ENCODE measurements at regions of chr19 and their contacts with region 1.

Region 1: GRCh38 chr19:46990991-46991676 is 28.5 kb upstream of the NPAS1 start:
- DNase-seq: peak; percentile 77 to 85
- ATAC-seq: peak; percentile 70 to 87
- H3K4me3 ChIP-seq: no peak overlapping the region
- H3K27ac ChIP-seq: peak overlapping the region; percentile 31 to 65; a peak in 3 of 6 replicates
- H3K4me1 ChIP-seq: peaks cover 9% of the 10 kb centered on the region; the same call in 2 of the 3 replicates
- CTCF ChIP-seq: peak; percentile 97
- EP300 ChIP-seq: no peak
- POLR2A ChIP-seq: no peak
- RAD21 ChIP-seq: peak; percentile 99

Region 2: GRCh38 chr19:46766569-46767317 is 224.4 kb before region 1 on chr19:
- CTCF ChIA-PET with region 1: interaction called, 11 read pairs
- POLR2A ChIA-PET with region 1: no interaction called
- DNase-seq: peak in 1 of 2 experiments; percentile 75
- ATAC-seq: peak; percentile 79 to 84
- H3K4me3 ChIP-seq: no peak overlapping the region
- H3K27ac ChIP-seq: no peak overlapping the region
- H3K4me1 ChIP-seq: peaks cover 21% of the 10 kb centered on the region; the same call in 2 of the 3 replicates
- CTCF ChIP-seq: peak; percentile 87
- EP300 ChIP-seq: no peak
- POLR2A ChIP-seq: no peak
- RAD21 ChIP-seq: peak; percentile 38 to 59; a peak in 4 of 5 replicates

Region 3: DNA sequence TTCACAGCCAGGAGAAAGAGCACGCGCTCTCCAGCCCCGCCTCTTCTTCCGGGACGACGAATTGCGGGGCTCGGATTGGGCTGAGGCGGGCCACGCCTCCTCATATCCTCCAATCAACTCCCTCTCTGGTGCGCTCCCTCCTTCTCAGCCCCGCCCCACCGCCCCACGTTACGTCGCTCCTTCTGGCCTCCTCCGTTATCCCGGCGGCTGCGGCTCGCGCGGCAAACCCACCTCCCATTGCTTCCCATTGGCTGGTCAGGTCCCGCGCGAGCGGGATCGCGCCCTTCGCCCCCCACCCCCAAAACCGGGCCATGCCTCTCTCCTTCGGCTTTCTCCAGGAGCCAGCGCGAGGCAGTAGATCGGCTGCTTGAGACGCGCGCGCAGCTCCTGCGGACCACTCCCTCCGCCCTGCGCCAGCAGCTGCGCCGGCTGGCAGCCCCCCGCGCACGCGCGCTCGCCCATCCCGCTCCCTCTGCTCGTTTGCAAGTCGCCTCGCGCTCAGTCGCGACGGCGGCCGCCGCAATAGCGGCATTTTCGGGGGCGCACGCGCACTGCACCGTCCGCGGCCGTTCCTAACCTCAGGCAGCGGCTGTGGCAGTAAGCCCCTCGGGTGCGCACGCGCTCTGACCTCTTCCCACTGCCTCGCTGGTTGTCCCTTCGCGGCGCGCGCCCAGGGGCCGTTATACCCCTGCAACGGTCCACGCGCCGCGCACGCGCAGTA is 130.8 kb before region 1 on chr19:
- CTCF ChIA-PET with region 1: interaction called, 339 read pairs
- POLR2A ChIA-PET with region 1: interaction called, 3 read pairs
- DNase-seq: peak; percentile 98 to 100
- ATAC-seq: peak; percentile 75 to 86
- H3K4me3 ChIP-seq: peak overlapping the region; percentile 94
- H3K27ac ChIP-seq: peak overlapping the region; percentile 99
- H3K4me1 ChIP-seq: peaks cover 55% of the 10 kb centered on the region
- CTCF ChIP-seq: no peak
- EP300 ChIP-seq: peak in 1 of 2 experiments; percentile 13; a peak in 1 of 5 replicates
- POLR2A ChIP-seq: peak; percentile 91; the same call in 1 of the 2 replicates
- RAD21 ChIP-seq: peak in 1 of 2 experiments; percentile 23; a peak in 1 of 5 replicates

Region 4: GRCh38 chr19:46890423-46891170 is 100.5 kb before region 1 on chr19:
- CTCF ChIA-PET with region 1: interaction called, 28 read pairs
- POLR2A ChIA-PET with region 1: no interaction called
- DNase-seq: peak; percentile 64 to 87
- ATAC-seq: peak; percentile 91 to 96
- H3K4me3 ChIP-seq: 0 out of 3 replicates have a peak overlapping the region, but pooled peaks have one; percentile 7
- H3K27ac ChIP-seq: peak overlapping the region; percentile 69 to 83
- H3K4me1 ChIP-seq: peaks cover 69% of the 10 kb centered on the region
- CTCF ChIP-seq: no peak
- EP300 ChIP-seq: no peak
- POLR2A ChIP-seq: no peak
- RAD21 ChIP-seq: peak; percentile 36 to 41; a peak in 3 of 5 replicates

Region 5: DNA sequence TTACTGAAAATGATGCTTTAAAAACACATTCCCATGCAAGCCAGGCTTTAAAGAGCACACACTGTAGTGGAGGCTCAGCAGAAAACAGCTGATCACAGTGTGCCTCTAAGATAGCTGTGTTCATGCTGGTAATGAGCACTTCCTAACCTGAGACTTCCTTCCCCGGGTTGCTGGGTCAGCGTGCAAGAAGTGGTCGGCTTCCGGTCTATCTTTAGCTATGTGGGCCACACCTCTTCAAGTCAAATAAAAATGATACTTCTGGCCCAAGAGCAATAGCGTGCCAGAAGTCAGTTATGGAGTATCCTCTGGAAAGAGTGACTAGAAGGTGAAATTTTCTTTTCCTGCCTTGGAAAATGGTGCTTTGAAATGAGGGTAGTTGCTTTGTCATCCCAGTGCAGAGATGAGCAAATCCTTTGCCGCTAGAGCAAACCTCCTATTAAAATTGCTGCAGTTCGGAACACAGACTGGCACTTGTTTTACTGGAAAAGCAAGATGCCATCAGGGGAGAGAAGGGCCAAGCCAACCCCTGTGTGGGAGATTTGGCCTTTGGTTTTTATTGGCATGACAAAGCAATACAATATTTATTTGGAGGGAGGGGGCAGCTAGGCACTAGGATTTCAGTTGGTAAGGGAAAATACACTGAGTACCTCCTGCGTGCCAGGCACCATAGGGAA is 66.1 kb before region 1 on chr19:
- CTCF ChIA-PET with region 1: interaction called, 83 read pairs
- POLR2A ChIA-PET with region 1: no interaction called
- DNase-seq: peak; percentile 40 to 70
- ATAC-seq: peak; percentile 72 to 78
- H3K4me3 ChIP-seq: peak overlapping the region; percentile 1; the same call in 1 of the 3 replicates
- H3K27ac ChIP-seq: peak overlapping the region; percentile 66 to 81
- H3K4me1 ChIP-seq: peaks cover 64% of the 10 kb centered on the region
- CTCF ChIP-seq: no peak
- EP300 ChIP-seq: no peak
- POLR2A ChIP-seq: no peak
- RAD21 ChIP-seq: no peak; a peak in 1 of 5 replicates

Region 6: GRCh38 chr19:46975925-46976782 is 15.0 kb before region 1 on chr19:
- CTCF ChIA-PET with region 1: interaction called, 156 read pairs
- POLR2A ChIA-PET with region 1: no interaction called
- DNase-seq: peak in 1 of 2 experiments; percentile 58
- ATAC-seq: peak; percentile 38 to 75
- H3K4me3 ChIP-seq: no peak overlapping the region
- H3K27ac ChIP-seq: peak overlapping the region; percentile 61 to 76
- H3K4me1 ChIP-seq: peaks cover 36% of the 10 kb centered on the region
- CTCF ChIP-seq: no peak
- EP300 ChIP-seq: no peak
- POLR2A ChIP-seq: no peak
- RAD21 ChIP-seq: no peak

Measured in A549 (cell line).